Gastrocnemius medialis (tissue), 4 donors: ENCODE measurements at regions of chr5 and their contacts with region 1.

Region 1: DNA sequence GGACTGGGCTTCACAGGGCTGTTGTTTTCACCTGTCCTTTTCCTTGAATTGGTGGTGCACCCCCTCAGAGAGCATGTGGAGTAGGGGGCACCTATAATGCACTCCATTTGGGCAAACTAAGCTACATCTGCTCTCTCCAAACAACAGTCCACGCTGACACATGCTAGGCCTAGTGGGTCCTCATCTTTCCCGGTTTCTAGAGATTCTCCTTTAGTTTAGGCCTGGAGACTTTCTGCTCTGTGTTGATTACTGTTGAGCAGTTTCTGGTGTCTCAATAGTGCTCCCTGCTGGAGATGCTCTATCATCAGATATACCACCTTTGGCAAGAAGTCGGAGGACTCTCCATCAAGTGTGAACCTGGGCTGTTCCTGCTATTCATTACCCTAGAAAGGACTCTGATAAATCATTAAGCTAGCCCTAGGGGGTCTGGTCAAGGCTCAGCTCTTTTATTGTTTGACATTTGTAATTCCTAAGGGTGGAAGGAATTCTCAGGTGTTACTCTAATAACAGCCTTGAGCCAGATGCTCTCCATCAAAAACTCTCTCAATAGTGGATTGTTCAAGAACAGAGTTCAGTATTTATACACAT is 64.0 kb upstream of the FYB1 start:
- DNase-seq: peak in 1 of 2 donors; percentile 10
- ATAC-seq: peak; percentile 89 to 98
- H3K4me3 ChIP-seq: no peak overlapping the region
- H3K27ac ChIP-seq: no peak overlapping the region
- H3K4me1 ChIP-seq: no peaks in the 10 kb centered on the region
- H3K27me3 ChIP-seq: no peaks in the 10 kb centered on the region
- CTCF ChIP-seq: peak; percentile 34 to 66 (median 59)
- POLR2A ChIP-seq: no peak

Region 2: DNA sequence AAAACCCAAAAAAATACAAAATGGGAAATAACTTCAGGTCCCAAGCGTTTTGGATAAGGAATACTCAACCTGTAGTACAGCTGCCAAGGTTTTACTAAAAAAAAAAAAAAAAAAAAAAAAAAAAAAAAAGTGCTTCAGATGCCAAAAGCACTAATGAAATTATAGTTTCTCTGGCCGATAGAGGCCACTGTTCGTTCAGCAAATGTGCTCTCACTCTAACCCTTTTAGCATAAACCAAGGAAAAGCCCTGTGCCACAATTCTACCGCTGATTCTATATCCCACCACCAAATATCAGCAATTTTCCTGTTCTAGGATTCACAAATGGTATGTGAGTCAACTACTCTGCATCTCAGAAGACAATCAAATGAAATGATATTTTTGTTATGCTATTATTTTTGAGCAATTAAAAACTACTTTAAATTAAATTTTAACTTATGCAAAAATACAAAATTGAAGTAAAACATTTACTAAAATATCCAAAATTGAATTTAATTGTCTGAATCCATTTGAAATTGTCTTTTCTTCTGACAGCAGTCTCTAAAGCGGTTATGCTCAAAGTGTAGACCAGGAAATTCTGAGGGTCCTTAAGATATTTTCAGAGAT is 288.9 kb before region 1 on chr5:
- in situ Hi-C with region 1: no loop called
- intact Hi-C with region 1: loop called (anchors 5 kb)
- DNase-seq: peak in 1 of 2 donors; percentile 24
- ATAC-seq: peak; percentile 81 to 84
- H3K4me3 ChIP-seq: no peak overlapping the region
- H3K27ac ChIP-seq: no peak overlapping the region
- H3K4me1 ChIP-seq: peaks cover 7 to 15% of the 10 kb centered on the region in 2 donors
- H3K27me3 ChIP-seq: no peaks in the 10 kb centered on the region
- CTCF ChIP-seq: peak in 4 of 5 experiments; percentile 31 to 55 (median 42)
- POLR2A ChIP-seq: no peak